Adrenal gland (tissue), 19 donors: ENCODE measurements at regions of chr1 and their contacts with region 1.

Region 1: GRCh38 chr1:43912607-43913006 is 21.0 kb upstream of the ARTN start:
- DNase-seq: peak in 1 of 7 donors; percentile 32
- H3K4me3 ChIP-seq: no peak overlapping the region
- H3K27ac ChIP-seq: peak overlapping the region in 1 of 5 donors; percentile 11
- H3K4me1 ChIP-seq: peaks cover 0 to 4% of the 10 kb centered on the region in 2 donors
- H3K27me3 ChIP-seq: no peaks in the 10 kb centered on the region
- CTCF ChIP-seq: no peak
- POLR2A ChIP-seq: no peak

Region 2: DNA sequence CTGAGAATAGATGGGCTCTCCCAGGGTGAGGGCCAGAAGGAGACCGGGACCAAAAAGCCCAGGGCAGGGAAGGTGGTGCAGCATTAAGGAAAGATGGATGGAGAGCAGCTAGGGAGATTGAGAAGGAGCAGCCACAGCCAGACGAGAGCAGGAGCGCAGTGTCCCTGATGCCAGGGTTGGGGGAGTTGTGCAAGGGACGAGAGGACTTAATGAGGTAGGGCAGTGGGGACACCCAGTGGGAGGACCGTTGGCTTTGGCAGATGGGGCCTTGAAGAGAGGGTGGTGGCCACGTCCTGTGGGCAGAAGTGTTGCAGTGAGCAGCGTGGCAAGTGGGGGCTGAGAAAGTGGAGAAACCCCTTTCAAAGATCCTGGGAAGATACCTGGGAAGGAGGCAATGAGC is 300.7 kb before region 1 on chr1:
- intact Hi-C with region 1: loop called in 1 of 2 experiments (anchors 10 kb)
- DNase-seq: peak in 1 of 7 donors; percentile 7
- H3K4me3 ChIP-seq: no peak overlapping the region
- H3K27ac ChIP-seq: no peak overlapping the region
- H3K4me1 ChIP-seq: peaks cover 6 to 9% of the 10 kb centered on the region in 2 donors
- H3K27me3 ChIP-seq: no peaks in the 10 kb centered on the region
- CTCF ChIP-seq: no peak
- POLR2A ChIP-seq: no peak

Region 3: DNA sequence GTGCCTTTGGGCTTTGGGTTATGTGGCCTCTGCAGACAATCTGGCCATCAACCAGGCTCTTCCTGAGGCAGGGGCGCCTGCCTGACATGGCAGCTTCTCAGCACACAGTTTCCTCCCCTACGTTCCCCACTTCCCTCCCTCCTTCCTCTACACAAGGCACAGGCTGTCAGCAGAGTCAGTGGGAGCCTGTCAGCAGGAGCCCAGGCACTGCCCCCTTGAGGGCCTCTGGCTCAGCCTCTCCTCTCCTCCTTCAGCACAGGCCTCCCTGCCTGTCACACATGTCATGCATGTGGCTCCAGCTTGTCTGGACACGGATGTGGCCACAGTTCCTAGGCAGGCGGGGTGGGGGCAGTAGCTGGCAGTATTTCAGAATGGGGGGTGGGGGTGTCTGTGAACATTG is 31.2 kb before region 1 on chr1:
- intact Hi-C with region 1: no loop called
- DNase-seq: no peak
- H3K4me3 ChIP-seq: no peak overlapping the region
- H3K27ac ChIP-seq: no peak overlapping the region
- H3K4me1 ChIP-seq: no peaks in the 10 kb centered on the region
- H3K27me3 ChIP-seq: no peaks in the 10 kb centered on the region
- CTCF ChIP-seq: no peak
- POLR2A ChIP-seq: no peak

Region 4: DNA sequence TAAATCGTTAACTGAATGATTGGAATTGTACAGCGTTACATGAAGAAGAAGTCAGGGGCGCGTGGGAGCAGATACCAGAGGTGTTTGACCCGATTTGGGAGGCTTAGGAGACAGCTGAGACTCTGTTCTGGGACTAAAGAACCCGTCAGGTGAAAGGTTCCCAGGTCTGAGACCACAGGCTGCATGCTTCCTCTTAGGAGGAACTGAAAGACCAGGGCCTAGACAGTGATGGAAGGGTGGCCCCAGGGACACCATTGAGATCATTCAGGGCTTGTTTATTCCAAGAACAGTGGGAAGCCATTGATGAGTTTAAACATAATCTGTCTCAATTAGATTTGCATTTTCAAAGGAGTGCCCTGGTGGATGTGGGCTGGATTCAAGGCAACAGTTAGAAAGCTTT is 206.9 kb after region 1 on chr1:
- intact Hi-C with region 1: no loop called
- DNase-seq: peak in 1 of 7 donors; percentile 3
- H3K4me3 ChIP-seq: no peak overlapping the region
- H3K27ac ChIP-seq: no peak overlapping the region
- H3K4me1 ChIP-seq: no peaks in the 10 kb centered on the region
- H3K27me3 ChIP-seq: no peaks in the 10 kb centered on the region
- CTCF ChIP-seq: no peak
- POLR2A ChIP-seq: no peak